ENCODE measurements at regions of chr13 and their contacts with region 1.

Region 1: GRCh38 chr13:21470785-21471184 is 11.7 kb upstream of the ZDHHC20 start:
- DNase-seq: no peak
- ATAC-seq: no peak
- H3K4me3 ChIP-seq: no peak overlapping the region
- H3K27ac ChIP-seq: no peak overlapping the region
- H3K4me1 ChIP-seq: no peaks in the 10 kb centered on the region
- H3K27me3 ChIP-seq: no peaks in the 10 kb centered on the region

Region 2: GRCh38 chr13:21297914-21298831 is 172.6 kb before region 1 on chr13:
- intact Hi-C with region 1: loop called in 3 of 4 experiments (anchors 5 to 10 kb)
- DNase-seq: peak; percentile 87 to 93 (median 93)
- ATAC-seq: peak; percentile 100
- H3K4me3 ChIP-seq: peak overlapping the region; percentile 72
- H3K27ac ChIP-seq: no peak overlapping the region
- H3K4me1 ChIP-seq: peaks cover 4% of the 10 kb centered on the region
- H3K27me3 ChIP-seq: no peaks in the 10 kb centered on the region

Region 3: GRCh38 chr13:21567714-21568113 is 96.9 kb after region 1 on chr13:
- intact Hi-C with region 1: no loop called
- DNase-seq: no peak
- ATAC-seq: no peak
- H3K4me3 ChIP-seq: no peak overlapping the region
- H3K27ac ChIP-seq: no peak overlapping the region
- H3K4me1 ChIP-seq: no peaks in the 10 kb centered on the region
- H3K27me3 ChIP-seq: no peaks in the 10 kb centered on the region